ENCODE measurements at regions of chr1 and their contacts with region 1.

Region 1: GRCh38 chr1:234978397-234979295 is 150.0 kb downstream of the TOMM20 start:
- DNase-seq: peak; percentile 82
- H3K4me3 Mint-ChIP-seq: peak overlapping the region; percentile 79
- H3K27ac Mint-ChIP-seq: peak overlapping the region; percentile 98
- H3K4me1 Mint-ChIP-seq: peaks cover 80% of the 10 kb centered on the region
- H3K27me3 Mint-ChIP-seq: no peaks in the 10 kb centered on the region

Region 2: DNA sequence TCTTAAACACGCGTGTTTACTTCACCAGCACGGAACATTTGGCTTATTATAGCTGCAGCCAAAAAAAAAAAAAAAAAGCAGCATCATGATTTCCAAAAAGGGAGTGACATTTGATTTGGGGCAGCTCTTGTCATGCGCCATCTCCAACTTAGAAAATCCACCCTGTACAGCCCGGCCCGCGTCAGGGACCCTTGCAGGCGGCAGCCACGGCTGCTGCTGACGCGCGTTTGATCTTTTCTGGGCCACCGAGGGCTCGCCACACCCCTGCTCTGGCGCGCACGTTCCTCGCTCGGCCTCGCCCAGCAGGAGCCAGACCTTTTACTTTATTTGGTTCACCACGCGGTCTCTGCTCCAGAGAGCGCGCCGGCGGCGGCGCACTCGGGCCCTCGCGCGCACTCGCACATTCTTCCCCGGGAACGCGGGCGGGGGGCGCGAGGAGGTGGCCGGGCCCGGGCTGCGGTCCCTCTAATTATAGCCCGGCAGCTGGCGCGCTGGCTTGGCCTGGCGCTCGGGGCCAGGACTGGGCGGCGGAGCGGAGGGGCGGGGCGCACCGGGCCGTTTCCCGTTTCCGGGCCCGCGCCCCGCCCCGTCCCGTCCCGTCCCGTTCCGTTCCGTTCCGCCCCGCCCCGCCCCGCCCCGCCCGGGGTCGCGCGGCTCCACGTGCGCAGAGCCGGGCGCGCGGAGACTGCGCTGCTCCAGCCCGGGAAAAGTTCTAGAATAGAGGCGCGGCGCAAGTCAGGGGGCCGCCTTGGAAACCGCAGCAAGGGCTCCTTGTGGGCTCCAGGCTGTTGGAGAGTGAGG is 378.8 kb before region 1 on chr1:
- intact Hi-C with region 1: loop called (anchors 2 kb)
- DNase-seq: peak; percentile 92
- H3K4me3 Mint-ChIP-seq: peak overlapping the region; percentile 89
- H3K27ac Mint-ChIP-seq: peak overlapping the region; percentile 97
- H3K4me1 Mint-ChIP-seq: peaks cover 47% of the 10 kb centered on the region
- H3K27me3 Mint-ChIP-seq: no peaks in the 10 kb centered on the region

Region 3: GRCh38 chr1:234730770-234731568 is 247.7 kb before region 1 on chr1:
- intact Hi-C with region 1: loop called (anchors 1 kb)
- DNase-seq: peak; percentile 86
- H3K4me3 Mint-ChIP-seq: peak overlapping the region; percentile 68
- H3K27ac Mint-ChIP-seq: peak overlapping the region; percentile 96
- H3K4me1 Mint-ChIP-seq: peaks cover 77% of the 10 kb centered on the region
- H3K27me3 Mint-ChIP-seq: no peaks in the 10 kb centered on the region

Region 4: DNA sequence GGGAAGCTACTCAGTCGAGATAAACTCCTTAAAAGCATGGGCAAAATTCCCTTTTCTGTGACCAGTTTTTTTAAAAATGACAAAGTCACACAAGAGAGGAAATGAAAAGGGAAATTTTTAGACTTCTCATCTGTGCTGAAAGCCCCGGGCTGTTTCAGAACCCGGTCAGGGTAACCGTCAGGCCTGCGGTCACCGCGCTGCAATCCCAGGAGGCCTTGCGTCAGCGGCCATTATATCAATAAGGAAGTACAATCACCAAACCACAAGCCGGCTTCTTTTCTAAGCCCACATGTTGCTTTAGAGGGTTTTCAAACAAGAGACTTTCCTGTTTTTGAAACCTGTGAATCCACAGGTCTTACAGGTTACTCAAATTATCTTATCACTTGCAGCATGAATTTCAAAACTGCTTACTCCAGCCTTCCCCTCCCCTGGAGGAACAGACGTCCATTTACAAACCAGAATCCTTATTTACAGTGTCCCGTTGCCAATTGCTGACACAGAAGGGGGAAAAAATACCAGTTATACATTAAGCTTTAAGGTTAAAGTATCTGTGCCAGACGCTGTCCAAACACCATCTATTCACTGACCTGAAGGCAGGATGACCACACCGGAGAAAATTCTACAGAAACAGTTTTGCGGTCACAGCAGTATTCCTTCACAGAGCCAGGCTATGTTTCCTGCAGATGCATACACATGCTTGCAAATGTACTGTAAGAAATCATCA is 15.3 kb before region 1 on chr1:
- intact Hi-C with region 1: loop called (anchors 1 kb)
- DNase-seq: peak; percentile 96
- H3K4me3 Mint-ChIP-seq: peak overlapping the region; percentile 79
- H3K27ac Mint-ChIP-seq: peak overlapping the region; percentile 97
- H3K4me1 Mint-ChIP-seq: peaks cover 69% of the 10 kb centered on the region
- H3K27me3 Mint-ChIP-seq: no peaks in the 10 kb centered on the region

Region 5: GRCh38 chr1:235075188-235075926 is 96.7 kb after region 1 on chr1:
- intact Hi-C with region 1: loop called (anchors 2 kb)
- DNase-seq: peak; percentile 82
- H3K4me3 Mint-ChIP-seq: peak overlapping the region; percentile 69
- H3K27ac Mint-ChIP-seq: peak overlapping the region; percentile 100
- H3K4me1 Mint-ChIP-seq: peaks cover 31% of the 10 kb centered on the region
- H3K27me3 Mint-ChIP-seq: no peaks in the 10 kb centered on the region

Region 6: DNA sequence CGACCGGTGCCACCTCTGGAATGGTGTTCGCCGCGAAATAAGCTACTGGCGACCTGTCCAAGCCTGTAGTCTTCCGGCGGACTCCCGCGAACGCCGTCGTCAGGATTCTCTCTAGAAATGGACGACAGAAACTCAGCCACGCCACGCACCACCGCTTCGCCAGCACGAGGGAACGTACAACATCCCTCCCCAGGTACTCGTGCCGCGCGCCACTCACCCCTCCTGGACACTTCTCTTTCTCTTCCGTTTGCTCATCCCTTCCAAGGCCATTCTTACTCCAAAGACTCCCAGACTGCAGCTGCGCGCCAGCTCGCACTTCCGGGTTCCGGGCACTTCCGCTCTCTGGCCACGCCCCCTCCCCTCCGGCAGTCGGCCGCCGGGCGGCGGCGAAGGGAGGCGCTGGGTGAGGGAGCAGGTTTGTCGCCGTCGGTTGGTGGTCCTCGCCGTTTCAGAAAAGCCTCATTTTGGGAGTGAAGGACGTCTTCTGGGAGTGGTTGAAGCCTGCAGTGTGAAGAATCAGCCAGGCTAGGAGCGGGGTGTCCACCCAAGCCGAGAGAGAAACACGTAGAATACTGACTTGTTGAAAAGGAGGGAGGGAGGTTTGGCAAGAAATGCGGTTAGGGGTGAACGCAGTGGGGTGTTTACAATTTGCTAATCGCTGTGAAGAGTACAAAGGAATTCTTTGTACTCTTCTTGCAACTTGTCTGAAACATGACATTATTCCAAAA is 182.5 kb after region 1 on chr1 and contains the start of gene RBM34:
- intact Hi-C with region 1: no loop called
- DNase-seq: peak; percentile 98
- H3K4me3 Mint-ChIP-seq: peak within 1 kb of the TSS; percentile 93
- H3K27ac Mint-ChIP-seq: peak within 1 kb of the TSS; percentile 94
- H3K4me1 Mint-ChIP-seq: peaks cover 12% of the 10 kb centered on the region
- H3K27me3 Mint-ChIP-seq: no peaks in the 10 kb centered on the region
- total RNA-seq, gene RBM34: 123 and 135 TPM in 2 replicates